AG04450 (cell line): ENCODE measurements at regions of chr5 and their contacts with region 1.

Region 1: GRCh38 chr5:102681407-102681983 is 73.6 kb upstream of the PAM start:
- DNase-seq: peak; percentile 36
- H3K4me3 ChIP-seq: no peak overlapping the region
- H3K27ac ChIP-seq: no peak overlapping the region
- H3K27me3 ChIP-seq: no peaks in the 10 kb centered on the region
- CTCF ChIP-seq: peak; percentile 87

Region 2: DNA sequence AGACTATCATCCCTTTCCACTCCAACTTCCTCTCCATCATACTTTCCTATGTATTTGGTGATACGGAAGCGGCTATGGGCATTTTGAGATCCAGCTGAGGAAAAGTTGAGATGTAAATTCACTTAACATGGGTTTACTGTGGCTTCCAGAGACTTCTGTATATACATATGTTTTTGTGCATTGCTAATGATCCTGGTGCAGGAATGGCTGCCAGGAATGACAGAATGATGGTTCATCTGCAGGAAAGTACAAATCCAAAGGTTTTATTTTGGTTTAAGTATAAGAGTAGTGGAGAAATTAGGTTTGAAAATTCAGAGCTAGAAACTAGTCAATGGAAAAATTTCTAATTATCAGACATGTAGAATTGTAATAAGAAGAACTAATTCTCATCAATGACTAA is 21.4 kb before region 1 on chr5:
- CTCF ChIA-PET with region 1: interaction called, 12 read pairs
- POLR2A ChIA-PET with region 1: no interaction called
- DNase-seq: no peak
- H3K4me3 ChIP-seq: no peak overlapping the region
- H3K27ac ChIP-seq: no peak overlapping the region
- H3K27me3 ChIP-seq: peaks cover 2% of the 10 kb centered on the region
- CTCF ChIP-seq: no peak

Region 3: GRCh38 chr5:102715082-102715819 is 33.8 kb after region 1 on chr5:
- CTCF ChIA-PET with region 1: interaction called, 15 read pairs
- POLR2A ChIA-PET with region 1: no interaction called
- DNase-seq: peak; percentile 53
- H3K4me3 ChIP-seq: no peak overlapping the region
- H3K27ac ChIP-seq: no peak overlapping the region
- H3K27me3 ChIP-seq: no peaks in the 10 kb centered on the region
- CTCF ChIP-seq: no peak

Region 4: DNA sequence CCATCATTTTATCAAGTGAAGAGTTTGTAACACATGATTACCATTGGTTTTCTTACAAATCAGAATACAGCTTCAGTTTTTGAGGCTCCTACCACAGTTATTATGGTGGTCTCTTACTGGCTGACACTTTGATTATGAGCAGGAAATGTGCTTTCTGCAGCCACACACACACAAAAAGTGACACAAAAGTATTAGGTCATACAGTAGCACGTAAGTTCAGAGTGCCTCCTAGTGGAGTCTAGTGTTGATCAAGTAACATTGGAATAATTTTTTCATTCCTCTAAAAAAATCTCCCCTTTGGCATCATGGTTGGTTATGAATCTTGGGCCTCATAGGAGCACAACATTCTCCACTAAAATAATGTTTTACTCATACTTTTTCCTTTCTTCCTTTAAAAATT is 111.2 kb after region 1 on chr5:
- CTCF ChIA-PET with region 1: interaction called, 14 read pairs
- POLR2A ChIA-PET with region 1: no interaction called
- DNase-seq: no peak
- H3K4me3 ChIP-seq: no peak overlapping the region
- H3K27ac ChIP-seq: no peak overlapping the region
- H3K27me3 ChIP-seq: no peaks in the 10 kb centered on the region
- CTCF ChIP-seq: peak; percentile 22

Region 5: GRCh38 chr5:102955488-102955887 is 274.0 kb after region 1 on chr5:
- CTCF ChIA-PET with region 1: interaction called, 10 read pairs
- POLR2A ChIA-PET with region 1: no interaction called
- DNase-seq: no peak
- H3K4me3 ChIP-seq: no peak overlapping the region
- H3K27ac ChIP-seq: no peak overlapping the region
- H3K27me3 ChIP-seq: no peaks in the 10 kb centered on the region
- CTCF ChIP-seq: no peak

Region 6: DNA sequence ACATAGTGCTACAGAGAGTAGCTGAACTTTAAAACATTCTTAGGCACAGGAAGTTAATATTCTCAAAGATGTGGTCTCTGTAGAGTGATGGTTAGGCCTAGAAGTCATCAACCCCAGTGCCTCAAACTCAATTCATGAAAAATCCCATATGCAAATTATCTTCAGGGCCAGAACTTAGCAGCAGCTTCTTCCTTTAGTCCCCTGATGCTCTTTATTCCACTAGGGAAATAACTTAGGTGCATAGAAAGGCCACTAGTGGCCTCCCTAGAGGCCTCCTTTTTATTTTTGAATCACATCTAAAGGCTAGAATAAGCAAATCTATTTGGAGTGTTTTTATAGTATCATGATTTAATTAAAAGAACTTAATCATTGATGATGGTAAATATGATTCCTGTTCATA is 350.1 kb after region 1 on chr5:
- CTCF ChIA-PET with region 1: interaction called, 13 read pairs
- POLR2A ChIA-PET with region 1: no interaction called
- DNase-seq: no peak
- H3K4me3 ChIP-seq: no peak overlapping the region
- H3K27ac ChIP-seq: no peak overlapping the region
- H3K27me3 ChIP-seq: no peaks in the 10 kb centered on the region
- CTCF ChIP-seq: peak; percentile 58